HAP-1 (cell line): ENCODE measurements at regions of chr13 and their contacts with region 1.

Region 1: GRCh38 chr13:73417015-73417623 is 358.3 kb downstream of the KLF5 start:
- DNase-seq: peak; percentile 29 to 39
- H3K4me3 ChIP-seq: no peak overlapping the region
- H3K4me1 ChIP-seq: no peaks in the 10 kb centered on the region; the same call in 1 of the 2 replicates
- H3K27me3 ChIP-seq: no peaks in the 10 kb centered on the region

Region 2: GRCh38 chr13:72839831-72840426 is 577.2 kb before region 1 on chr13:
- in situ Hi-C with region 1: loop called (anchors 25 kb)
- DNase-seq: peak; percentile 62 to 70
- H3K4me3 ChIP-seq: no peak overlapping the region
- H3K4me1 ChIP-seq: peaks cover 3% of the 10 kb centered on the region
- H3K27me3 ChIP-seq: no peaks in the 10 kb centered on the region